CD4-positive, alpha-beta T cell (primary cell): ENCODE measurements at regions of chr18 and their contacts with region 1.

Region 1: DNA sequence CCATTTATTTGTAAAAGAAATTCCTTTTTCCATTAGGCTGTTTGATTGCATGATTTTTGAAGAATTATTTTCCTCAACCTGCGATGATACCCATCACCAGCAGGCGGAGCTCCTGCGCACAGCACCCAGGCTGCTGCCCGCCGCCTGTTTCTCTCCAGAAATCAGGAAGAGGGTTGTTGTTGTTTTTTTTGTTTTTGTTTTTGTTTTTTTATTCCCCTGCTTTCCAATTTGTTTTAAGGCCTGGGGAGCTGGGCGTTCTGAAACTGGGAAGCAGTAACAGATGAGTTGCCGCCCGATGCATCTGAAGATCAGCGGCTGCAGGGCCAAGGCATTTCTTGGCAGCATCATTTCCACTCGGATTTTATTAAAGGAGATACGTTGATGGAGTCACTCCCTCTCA is 132.1 kb downstream of the MBP start:
- DNase-seq: peak in 13 of 14 experiments; percentile 34 to 78 (median 48)
- ATAC-seq: peak; percentile 56
- H3K4me3 ChIP-seq: no peak overlapping the region
- H3K4me3 Mint-ChIP-seq: no peak overlapping the region
- H3K27ac ChIP-seq: no peak overlapping the region
- H3K27ac Mint-ChIP-seq: no peak overlapping the region
- H3K4me1 ChIP-seq: peaks cover 17% of the 10 kb centered on the region
- H3K4me1 Mint-ChIP-seq: peaks cover 26% of the 10 kb centered on the region
- H3K27me3 ChIP-seq: no peaks in the 10 kb centered on the region
- H3K27me3 Mint-ChIP-seq: no peaks in the 10 kb centered on the region
- CTCF ChIP-seq: peak; percentile 99

Region 2: GRCh38 chr18:76982841-76983587 is 17.5 kb before region 1 on chr18:
- CTCF ChIA-PET with region 1: interaction called, 11 read pairs
- POLR2A ChIA-PET with region 1: no interaction called
- intact Hi-C with region 1: no loop called
- DNase-seq: peak; percentile 67 to 90 (median 82)
- ATAC-seq: peak; percentile 99
- H3K4me3 ChIP-seq: no peak overlapping the region
- H3K4me3 Mint-ChIP-seq: no peak overlapping the region
- H3K27ac ChIP-seq: no peak overlapping the region
- H3K27ac Mint-ChIP-seq: no peak overlapping the region
- H3K4me1 ChIP-seq: peaks cover 9% of the 10 kb centered on the region
- H3K4me1 Mint-ChIP-seq: no peaks in the 10 kb centered on the region
- H3K27me3 ChIP-seq: no peaks in the 10 kb centered on the region
- H3K27me3 Mint-ChIP-seq: no peaks in the 10 kb centered on the region
- CTCF ChIP-seq: peak; percentile 94

Region 3: GRCh38 chr18:77061946-77062517 is 61.5 kb after region 1 on chr18:
- CTCF ChIA-PET with region 1: interaction called, 16 read pairs
- POLR2A ChIA-PET with region 1: interaction called, 4 read pairs
- intact Hi-C with region 1: loop called in 1 of 2 experiments (anchors 2 kb)
- DNase-seq: peak in 7 of 14 experiments; percentile 24 to 74 (median 52)
- ATAC-seq: peak; percentile 9
- H3K4me3 ChIP-seq: peak overlapping the region; percentile 28
- H3K4me3 Mint-ChIP-seq: peak overlapping the region; percentile 55
- H3K27ac ChIP-seq: peak overlapping the region; percentile 89 to 93
- H3K27ac Mint-ChIP-seq: peak overlapping the region; percentile 98
- H3K4me1 ChIP-seq: peaks cover 91% of the 10 kb centered on the region
- H3K4me1 Mint-ChIP-seq: peaks cover 82% of the 10 kb centered on the region
- H3K27me3 ChIP-seq: no peaks in the 10 kb centered on the region
- H3K27me3 Mint-ChIP-seq: no peaks in the 10 kb centered on the region
- CTCF ChIP-seq: no peak

Region 4: DNA sequence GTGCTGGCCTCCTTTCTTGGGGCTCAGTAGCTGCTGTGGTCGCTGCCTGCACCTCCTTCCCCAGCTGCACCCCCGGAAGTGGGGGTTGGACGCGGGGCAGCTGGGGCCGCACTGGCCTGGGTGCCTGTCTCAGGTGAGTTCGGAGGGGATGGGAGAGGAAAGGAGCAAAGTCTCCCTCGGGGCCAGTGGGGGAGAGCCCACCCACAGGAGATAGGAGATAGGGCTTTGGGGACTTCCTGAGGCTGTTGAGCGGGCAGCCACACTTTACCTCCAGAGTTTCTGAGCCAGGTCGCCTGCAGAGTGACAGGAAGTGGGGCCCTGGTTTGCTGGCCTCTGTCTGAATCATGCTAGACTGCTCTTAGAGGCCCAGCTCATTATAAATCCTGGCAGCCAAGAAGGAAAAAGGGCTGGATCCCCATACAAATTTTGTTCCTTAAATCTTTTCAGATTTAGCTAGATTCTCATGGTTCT is 124.0 kb after region 1 on chr18:
- CTCF ChIA-PET with region 1: interaction called, 4 read pairs
- POLR2A ChIA-PET with region 1: interaction called, 5 read pairs
- intact Hi-C with region 1: loop called in 1 of 2 experiments (anchors 5 kb)
- DNase-seq: peak in 9 of 14 experiments; percentile 40 to 79 (median 55)
- ATAC-seq: peak; percentile 51
- H3K4me3 ChIP-seq: peak overlapping the region; percentile 10
- H3K4me3 Mint-ChIP-seq: peak overlapping the region; percentile 77
- H3K27ac ChIP-seq: peak overlapping the region; percentile 36 to 58
- H3K27ac Mint-ChIP-seq: peak overlapping the region; percentile 83
- H3K4me1 ChIP-seq: peaks cover 58% of the 10 kb centered on the region
- H3K4me1 Mint-ChIP-seq: peaks cover 99% of the 10 kb centered on the region
- H3K27me3 ChIP-seq: no peaks in the 10 kb centered on the region
- H3K27me3 Mint-ChIP-seq: no peaks in the 10 kb centered on the region
- CTCF ChIP-seq: no peak

Region 5: DNA sequence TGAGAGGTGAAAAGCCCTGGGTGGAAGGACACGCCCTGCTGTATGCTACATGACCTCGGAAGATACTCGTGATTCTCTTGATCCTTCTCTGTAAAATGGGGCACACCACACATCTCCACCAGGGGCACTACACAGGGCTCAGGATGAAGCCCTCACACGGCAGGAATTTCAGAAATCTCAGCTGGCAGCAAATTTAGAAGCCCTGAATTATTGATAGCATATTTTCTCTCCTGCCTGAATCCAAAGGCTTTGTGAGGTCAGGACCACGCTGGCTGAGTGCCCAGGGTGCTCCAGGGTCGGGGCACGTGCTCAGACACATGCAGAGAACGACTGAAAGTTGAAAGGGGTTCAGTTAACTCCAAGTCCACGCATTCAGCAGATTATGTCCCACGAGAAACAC is 207.0 kb after region 1 on chr18:
- CTCF ChIA-PET with region 1: interaction called, 13 read pairs
- POLR2A ChIA-PET with region 1: interaction called, 8 read pairs
- intact Hi-C with region 1: loop called (anchors 1 kb)
- DNase-seq: peak; percentile 19 to 84 (median 54)
- ATAC-seq: peak; percentile 97
- H3K4me3 ChIP-seq: no peak overlapping the region
- H3K4me3 Mint-ChIP-seq: peak overlapping the region; percentile 92
- H3K27ac ChIP-seq: no peak overlapping the region
- H3K27ac Mint-ChIP-seq: peak overlapping the region; percentile 78
- H3K4me1 ChIP-seq: peaks cover 33% of the 10 kb centered on the region
- H3K4me1 Mint-ChIP-seq: peaks cover 51% of the 10 kb centered on the region
- H3K27me3 ChIP-seq: no peaks in the 10 kb centered on the region
- H3K27me3 Mint-ChIP-seq: no peaks in the 10 kb centered on the region
- CTCF ChIP-seq: peak; percentile 76